Mucosa of descending colon (tissue), 3 donors: ENCODE measurements at regions of chr9 and their contacts with region 1.

Region 1: GRCh38 chr9:75855509-75855908 is 35.0 kb upstream of the PCSK5 start:
- DNase-seq: peak in 1 of 3 donors; percentile 78
- ATAC-seq: peak; percentile 64
- H3K4me3 ChIP-seq: no peak overlapping the region
- H3K4me1 ChIP-seq: no peaks in the 10 kb centered on the region
- CTCF ChIP-seq: no peak

Region 2: DNA sequence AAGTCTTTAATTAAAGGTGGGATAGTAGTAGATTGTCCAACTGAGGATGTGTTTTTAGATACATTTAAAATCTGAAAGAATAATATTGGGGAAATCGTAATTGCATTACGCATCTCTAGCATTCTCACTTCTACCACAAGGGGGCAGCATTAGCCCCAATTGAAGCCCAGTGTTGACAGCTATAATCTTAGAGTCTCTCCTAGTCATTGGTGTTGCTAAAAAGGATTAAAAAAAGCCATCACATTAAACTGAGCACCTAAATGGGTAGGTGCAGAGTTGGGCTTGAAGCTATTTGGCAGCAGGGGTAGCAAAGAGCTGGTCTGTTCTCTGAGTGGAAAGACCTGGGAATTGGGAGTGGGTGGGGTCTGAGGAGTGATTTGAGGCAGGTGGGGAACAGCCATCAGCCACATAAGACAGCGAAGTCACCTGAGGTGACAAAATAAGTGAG is 590.0 kb before region 1 on chr9:
- intact Hi-C with region 1: loop called in 1 of 2 experiments (anchors 5 kb)
- DNase-seq: peak in 1 of 3 donors; percentile 81
- ATAC-seq: peak; percentile 68
- H3K4me3 ChIP-seq: no peak overlapping the region
- H3K4me1 ChIP-seq: peaks cover 4% of the 10 kb centered on the region
- CTCF ChIP-seq: peak; percentile 61